Transverse colon (tissue), 4 donors: ENCODE measurements at regions of chr14 and their contacts with region 1.

Region 1: DNA sequence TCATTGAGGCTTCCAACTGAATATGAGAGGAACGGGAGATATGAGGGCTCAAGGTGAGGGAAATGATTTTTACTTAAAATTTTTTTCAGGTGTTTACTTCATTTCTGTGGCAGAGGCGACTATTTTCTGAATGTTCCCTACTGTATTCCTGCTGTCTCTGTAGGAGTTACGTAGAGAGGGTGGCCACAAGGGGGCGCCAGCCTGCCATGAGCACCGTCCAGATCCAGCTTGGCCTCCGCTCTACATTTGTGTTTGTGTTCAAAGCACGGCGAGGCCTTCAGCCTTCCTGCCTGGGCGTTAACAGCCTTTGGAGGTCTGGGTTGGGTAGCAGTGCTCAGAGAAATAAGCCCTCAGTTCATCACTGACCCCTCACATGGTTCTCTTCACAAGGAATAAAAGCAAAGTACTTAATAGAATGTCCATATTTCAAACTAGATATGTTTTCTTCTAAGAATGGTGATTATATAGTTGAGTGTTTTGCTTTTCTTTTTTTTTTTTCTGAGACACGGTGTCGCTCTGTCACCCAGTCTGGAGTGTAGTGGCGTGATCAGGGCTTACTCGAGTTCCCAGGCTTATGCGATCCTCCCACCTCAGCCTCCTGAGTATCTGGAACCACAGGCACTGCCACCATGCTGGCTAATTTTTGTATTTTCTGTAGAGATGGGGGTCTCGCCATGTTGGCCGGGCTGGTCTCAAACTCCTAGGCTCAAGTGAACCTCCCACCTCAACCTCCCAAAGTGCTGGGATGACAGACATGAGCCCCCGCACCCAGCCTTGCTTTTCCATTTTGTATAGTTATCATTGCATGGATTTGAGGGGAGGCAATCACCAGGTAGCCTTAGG is 22.3 kb downstream of the CKB start:
- DNase-seq: peak; percentile 91
- H3K4me3 ChIP-seq: no peak overlapping the region
- H3K27ac ChIP-seq: peak overlapping the region in 3 of 4 donors; percentile 29 to 60 (median 43)
- H3K4me1 ChIP-seq: peaks cover 0 to 8% (median 0%) of the 10 kb centered on the region in 4 donors
- H3K27me3 ChIP-seq: no peaks in the 10 kb centered on the region
- CTCF ChIP-seq: peak; percentile 86 to 94 (median 92)
- EP300 ChIP-seq: no peak
- POLR2A ChIP-seq: no peak

Region 2: GRCh38 chr14:103483600-103483999 is 16.8 kb before region 1 on chr14:
- in situ Hi-C with region 1: no loop called
- intact Hi-C with region 1: no loop called
- DNase-seq: no peak
- H3K4me3 ChIP-seq: no peak overlapping the region
- H3K27ac ChIP-seq: no peak overlapping the region
- H3K4me1 ChIP-seq: no peaks in the 10 kb centered on the region
- H3K27me3 ChIP-seq: no peaks in the 10 kb centered on the region
- CTCF ChIP-seq: no peak
- EP300 ChIP-seq: no peak
- POLR2A ChIP-seq: no peak

Region 3: DNA sequence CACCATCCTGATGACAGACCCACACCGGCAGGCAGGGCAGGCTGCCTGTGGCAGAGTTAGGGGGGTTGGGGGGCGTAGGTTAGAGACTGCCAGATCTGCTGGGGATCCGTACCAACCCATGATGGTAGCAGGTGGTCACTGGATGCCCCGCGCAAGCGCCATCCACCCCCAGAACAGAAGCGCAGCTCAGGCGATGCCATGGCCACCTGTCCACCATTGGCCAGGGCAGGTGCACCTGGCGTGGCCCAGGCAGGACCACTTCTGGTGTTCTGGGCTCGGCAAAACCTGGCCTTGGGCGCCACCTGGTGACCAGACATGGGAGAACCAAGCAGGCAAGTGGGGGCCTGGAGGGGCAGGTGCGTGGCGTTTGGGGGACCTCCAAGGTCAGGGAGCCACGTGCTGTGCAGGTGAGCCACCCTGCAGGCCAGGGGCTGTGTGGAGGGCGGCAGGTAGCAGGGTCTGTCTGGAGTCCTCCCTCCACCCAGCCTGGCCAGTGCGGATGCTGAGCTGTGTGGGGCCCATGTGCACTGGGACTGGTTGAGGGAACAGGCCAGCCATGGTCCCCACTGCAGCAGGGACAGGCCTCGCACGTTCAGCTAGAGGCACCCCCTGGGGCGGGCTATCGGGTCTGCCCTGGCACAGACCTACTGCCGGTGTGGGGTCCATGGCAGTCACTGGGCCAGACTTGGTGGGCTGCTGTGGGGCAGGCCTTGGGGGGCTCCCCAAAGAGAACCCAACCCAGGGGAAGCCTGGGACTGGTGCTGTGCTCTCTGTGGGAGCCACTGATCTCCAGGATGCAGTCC is 46.5 kb after region 1 on chr14:
- in situ Hi-C with region 1: loop called in 2 of 4 experiments (anchors 5 to 10 kb)
- intact Hi-C with region 1: loop called (anchors 1 kb)
- DNase-seq: peak; percentile 79
- H3K4me3 ChIP-seq: no peak overlapping the region
- H3K27ac ChIP-seq: no peak overlapping the region
- H3K4me1 ChIP-seq: peaks cover 45 to 67% (median 54%) of the 10 kb centered on the region in 4 donors
- H3K27me3 ChIP-seq: no peaks in the 10 kb centered on the region
- CTCF ChIP-seq: peak; percentile 84 to 98 (median 92)
- EP300 ChIP-seq: no peak
- POLR2A ChIP-seq: no peak

Region 4: GRCh38 chr14:103552011-103552845 is 51.9 kb after region 1 on chr14:
- in situ Hi-C with region 1: loop called in 2 of 4 experiments (anchors 5 to 10 kb)
- intact Hi-C with region 1: loop called (anchors 1 kb)
- DNase-seq: no peak
- H3K4me3 ChIP-seq: no peak overlapping the region
- H3K27ac ChIP-seq: peak overlapping the region; percentile 72 to 89 (median 82)
- H3K4me1 ChIP-seq: peaks cover 23 to 44% (median 28%) of the 10 kb centered on the region in 4 donors
- H3K27me3 ChIP-seq: no peaks in the 10 kb centered on the region
- CTCF ChIP-seq: no peak
- EP300 ChIP-seq: no peak
- POLR2A ChIP-seq: no peak